ENCODE measurements at regions of chr11 and their contacts with region 1.

Region 1: GRCh38 chr11:119205574-119206510 is at the start of gene CBL:
- DNase-seq: peak; percentile 81
- ATAC-seq: peak; percentile 95
- H3K4me3 ChIP-seq: peak within 1 kb of the TSS; percentile 80 to 96
- H3K27ac ChIP-seq: peak within 1 kb of the TSS; percentile 95
- H3K4me1 ChIP-seq: peaks cover 32% of the 10 kb centered on the region
- H3K27me3 ChIP-seq: no peaks in the 10 kb centered on the region
- CTCF ChIP-seq: peak; percentile 99
- total RNA-seq, gene CBL: 69.9 TPM

Region 2: DNA sequence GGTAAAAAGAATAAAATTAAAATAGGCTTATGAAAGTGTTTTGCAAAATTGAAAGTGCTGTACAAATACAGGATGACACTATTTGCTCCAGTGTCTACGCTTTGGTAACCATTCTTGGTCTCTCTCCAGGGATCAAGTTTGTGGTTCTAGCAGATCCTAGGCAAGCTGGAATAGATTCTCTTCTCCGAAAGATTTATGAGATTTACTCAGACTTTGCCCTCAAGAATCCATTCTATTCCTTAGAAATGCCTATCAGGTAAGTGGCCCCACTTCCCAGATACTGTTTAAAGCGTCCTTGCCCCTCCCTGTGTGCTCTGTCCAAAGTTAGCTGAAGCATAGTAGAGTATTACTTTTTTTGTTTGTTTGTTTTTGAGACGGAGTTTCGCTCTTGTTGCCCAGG is 184.2 kb before region 1 on chr11:
- CTCF ChIA-PET with region 1: no interaction called
- POLR2A ChIA-PET with region 1: no interaction called
- in situ Hi-C with region 1: no loop called
- intact Hi-C with region 1: no loop called
- DNase-seq: no peak
- ATAC-seq: no peak
- H3K4me3 ChIP-seq: no peak overlapping the region
- H3K27ac ChIP-seq: peak overlapping the region; percentile 30; the same call in 1 of the 2 replicates
- H3K4me1 ChIP-seq: peaks cover 25% of the 10 kb centered on the region
- H3K27me3 ChIP-seq: no peaks in the 10 kb centered on the region
- CTCF ChIP-seq: no peak

Region 3: DNA sequence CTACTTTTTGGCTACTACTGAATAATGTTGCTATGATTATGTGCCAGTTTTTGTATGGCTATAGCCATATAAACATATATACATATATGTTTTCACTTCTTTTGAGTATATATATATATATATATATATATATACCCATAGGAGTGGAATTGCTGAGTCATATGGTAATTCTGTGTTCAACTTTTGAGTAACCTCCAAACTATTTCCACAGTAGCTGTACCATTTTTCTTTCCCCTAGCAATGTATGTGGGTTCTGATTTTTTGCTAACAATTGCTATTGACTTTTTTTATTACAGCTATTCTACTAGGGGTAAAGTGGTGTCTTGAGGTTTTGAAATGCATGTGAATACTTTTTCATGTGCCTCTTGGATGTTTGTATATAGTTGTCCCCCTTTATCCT is 30.6 kb after region 1 on chr11:
- CTCF ChIA-PET with region 1: interaction called, 10 read pairs
- POLR2A ChIA-PET with region 1: no interaction called
- in situ Hi-C with region 1: no loop called
- intact Hi-C with region 1: no loop called
- DNase-seq: no peak
- ATAC-seq: no peak
- H3K4me3 ChIP-seq: no peak overlapping the region
- H3K27ac ChIP-seq: no peak overlapping the region
- H3K4me1 ChIP-seq: no peaks in the 10 kb centered on the region
- H3K27me3 ChIP-seq: no peaks in the 10 kb centered on the region
- CTCF ChIP-seq: no peak

Region 4: DNA sequence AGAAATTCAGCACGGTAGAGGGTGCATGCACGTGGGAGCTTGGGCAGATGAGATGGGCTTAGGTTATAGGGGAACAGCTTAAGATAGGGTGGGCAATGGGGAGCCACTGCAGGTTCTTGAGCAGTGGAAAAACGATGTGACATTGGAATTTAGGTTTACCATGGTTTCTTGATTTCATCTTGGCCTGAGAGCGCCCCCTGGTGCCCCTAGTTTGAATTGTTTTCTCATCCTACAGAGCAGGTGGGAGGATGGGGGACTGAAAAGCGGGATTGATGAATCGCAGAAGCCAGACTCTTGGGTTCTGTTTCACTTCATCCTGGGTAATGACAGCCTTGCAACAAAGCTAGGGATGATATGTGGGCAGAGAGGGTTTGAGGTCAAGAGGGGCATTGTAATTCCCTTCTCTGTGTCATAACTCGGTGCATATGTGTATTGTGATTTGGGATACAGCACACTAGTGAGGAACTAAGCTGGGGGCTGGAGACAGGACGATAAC is 117.7 kb after region 1 on chr11:
- CTCF ChIA-PET with region 1: interaction called, 9 read pairs
- POLR2A ChIA-PET with region 1: no interaction called
- in situ Hi-C with region 1: no loop called
- intact Hi-C with region 1: loop called (anchors 2 kb)
- DNase-seq: peak; percentile 66
- ATAC-seq: no peak
- H3K4me3 ChIP-seq: no peak overlapping the region
- H3K27ac ChIP-seq: no peak overlapping the region
- H3K4me1 ChIP-seq: peaks cover 28% of the 10 kb centered on the region
- H3K27me3 ChIP-seq: no peaks in the 10 kb centered on the region
- CTCF ChIP-seq: peak; percentile 96

Region 5: DNA sequence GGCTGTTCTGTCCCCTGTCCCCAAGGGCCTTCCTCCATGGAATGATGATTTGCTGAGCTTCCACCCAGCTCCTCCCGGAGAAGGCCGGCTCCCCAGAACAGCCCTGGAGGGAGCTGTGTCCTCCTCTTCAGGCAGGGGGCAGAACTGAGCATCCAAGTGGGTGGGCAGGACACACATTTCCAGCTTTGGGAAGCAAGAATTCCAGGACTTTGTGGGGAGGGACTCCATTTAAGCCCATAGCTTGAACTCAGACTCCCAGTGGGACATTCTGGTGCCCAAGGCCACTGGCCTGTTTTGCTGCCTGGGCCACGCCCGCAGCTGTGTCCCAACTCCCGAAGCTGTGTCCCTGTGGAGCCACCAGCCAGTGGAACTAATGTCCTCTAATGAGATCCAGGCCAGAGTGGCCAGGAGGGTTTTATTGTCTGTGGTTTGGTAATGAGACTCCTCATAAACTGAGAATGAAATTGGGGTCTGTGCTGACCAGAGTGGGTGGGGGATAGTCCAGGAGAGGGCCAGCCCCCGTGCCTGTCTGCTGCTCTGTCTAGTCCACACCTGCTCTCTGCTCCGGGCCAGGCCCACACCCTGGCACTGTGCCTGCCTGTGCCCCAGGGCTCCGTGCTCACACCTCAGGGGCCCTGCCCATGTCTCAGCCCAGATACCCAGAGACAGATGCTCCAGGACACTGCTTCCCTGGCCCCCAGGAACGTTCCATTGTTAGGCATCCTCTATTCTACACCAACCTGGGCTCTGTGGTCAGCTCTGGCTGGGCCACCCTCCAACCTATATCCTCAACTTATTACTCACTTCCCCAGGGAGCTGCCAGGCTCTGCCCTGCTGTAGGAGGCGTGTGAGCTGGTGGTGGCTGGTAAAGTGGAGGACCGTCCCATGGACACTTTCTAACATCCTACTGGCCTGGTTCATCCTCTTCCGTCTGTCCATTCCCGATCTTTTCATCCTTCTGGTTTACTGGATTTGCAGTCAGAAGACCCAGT is 515.6 kb after region 1 on chr11:
- CTCF ChIA-PET with region 1: no interaction called
- POLR2A ChIA-PET with region 1: interaction called, 14 read pairs
- in situ Hi-C with region 1: no loop called
- intact Hi-C with region 1: no loop called
- DNase-seq: no peak
- ATAC-seq: peak; percentile 64
- H3K4me3 ChIP-seq: no peak overlapping the region
- H3K27ac ChIP-seq: no peak overlapping the region
- H3K4me1 ChIP-seq: no peaks in the 10 kb centered on the region
- H3K27me3 ChIP-seq: no peaks in the 10 kb centered on the region
- CTCF ChIP-seq: peak; percentile 49

Region 6: GRCh38 chr11:120258661-120259060 is 1052.8 kb after region 1 on chr11:
- CTCF ChIA-PET with region 1: no interaction called
- POLR2A ChIA-PET with region 1: no interaction called
- in situ Hi-C with region 1: no loop called
- intact Hi-C with region 1: no loop called
- DNase-seq: no peak
- ATAC-seq: no peak
- H3K4me3 ChIP-seq: no peak overlapping the region
- H3K27ac ChIP-seq: no peak overlapping the region
- H3K4me1 ChIP-seq: no peaks in the 10 kb centered on the region
- H3K27me3 ChIP-seq: peaks cover 59% of the 10 kb centered on the region
- CTCF ChIP-seq: no peak

Measured in Panc1 (cell line).